ENCODE measurements at regions of chr14 and their contacts with region 1.

Region 1: DNA sequence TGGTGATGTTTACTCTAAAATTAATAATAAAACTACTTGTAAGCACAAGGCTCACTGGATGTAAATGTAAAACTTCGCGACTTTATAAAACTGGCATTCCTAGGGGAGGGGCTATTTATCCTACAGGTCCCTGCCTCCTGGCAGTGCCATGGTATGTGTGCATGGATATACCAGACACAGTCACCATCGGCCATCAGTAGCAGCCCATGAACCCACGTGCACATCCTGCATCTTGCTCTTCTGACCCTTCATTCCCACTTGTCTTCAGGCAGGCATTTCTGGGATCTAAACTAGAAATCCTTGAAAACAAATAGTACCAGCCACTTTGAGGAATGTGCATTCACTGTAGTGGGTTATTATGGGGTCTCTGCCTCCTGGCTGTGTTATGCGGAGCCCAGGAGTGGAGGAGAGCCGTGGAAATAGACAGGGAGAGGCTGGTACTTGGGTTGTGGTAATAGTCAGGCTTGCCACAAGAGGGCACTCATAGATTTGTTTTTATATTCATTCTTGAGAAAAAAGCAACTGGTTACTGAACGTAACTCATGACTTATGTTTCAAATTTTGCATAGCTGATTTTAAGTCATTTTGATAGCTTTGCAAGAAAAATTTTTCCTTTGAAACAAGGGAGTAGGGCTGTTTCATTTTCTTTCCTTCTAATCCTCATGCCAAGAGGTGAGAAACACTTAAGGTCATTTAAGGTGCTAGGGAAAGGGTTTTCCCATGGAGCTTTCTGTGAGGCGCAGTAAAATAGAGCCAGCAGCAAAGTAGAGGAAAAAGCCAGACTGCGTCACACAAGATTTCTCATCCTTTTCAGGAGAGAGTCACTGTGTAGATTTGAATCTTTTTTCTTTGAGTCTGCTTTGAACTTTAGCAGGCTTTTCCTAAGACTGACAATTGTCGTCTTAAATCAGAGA is 17.4 kb upstream of the GALNT16 start:
- DNase-seq: peak in 31 of 35 experiments; percentile 9 to 72 (median 42)
- ATAC-seq: peak in 3 of 4 experiments; percentile 53 to 69 (median 58)
- H3K4me3 ChIP-seq: no peak overlapping the region
- H3K4me3 Mint-ChIP-seq: no peak overlapping the region
- H3K27ac ChIP-seq: no peak overlapping the region
- H3K27ac Mint-ChIP-seq: no peak overlapping the region
- H3K4me1 ChIP-seq: no peaks in the 10 kb centered on the region
- H3K4me1 Mint-ChIP-seq: peaks cover 0 to 3% (median 3%) of the 10 kb centered on the region in 3 donors
- H3K27me3 ChIP-seq: no peaks in the 10 kb centered on the region
- H3K27me3 Mint-ChIP-seq: no peaks in the 10 kb centered on the region

Region 2: GRCh38 chr14:69460093-69460701 is 217.6 kb after region 1 on chr14:
- CTCF ChIA-PET with region 1: interaction called, 5 to 21 read pairs
- POLR2A ChIA-PET with region 1: no interaction called
- DNase-seq: peak in 31 of 35 experiments; percentile 4 to 68 (median 33)
- ATAC-seq: peak; percentile 47 to 71 (median 63)
- H3K4me3 ChIP-seq: no peak overlapping the region
- H3K4me3 Mint-ChIP-seq: no peak overlapping the region
- H3K27ac ChIP-seq: no peak overlapping the region
- H3K27ac Mint-ChIP-seq: no peak overlapping the region
- H3K4me1 ChIP-seq: no peaks in the 10 kb centered on the region
- H3K4me1 Mint-ChIP-seq: no peaks in the 10 kb centered on the region
- H3K27me3 ChIP-seq: no peaks in the 10 kb centered on the region
- H3K27me3 Mint-ChIP-seq: no peaks in the 10 kb centered on the region

Region 3: DNA sequence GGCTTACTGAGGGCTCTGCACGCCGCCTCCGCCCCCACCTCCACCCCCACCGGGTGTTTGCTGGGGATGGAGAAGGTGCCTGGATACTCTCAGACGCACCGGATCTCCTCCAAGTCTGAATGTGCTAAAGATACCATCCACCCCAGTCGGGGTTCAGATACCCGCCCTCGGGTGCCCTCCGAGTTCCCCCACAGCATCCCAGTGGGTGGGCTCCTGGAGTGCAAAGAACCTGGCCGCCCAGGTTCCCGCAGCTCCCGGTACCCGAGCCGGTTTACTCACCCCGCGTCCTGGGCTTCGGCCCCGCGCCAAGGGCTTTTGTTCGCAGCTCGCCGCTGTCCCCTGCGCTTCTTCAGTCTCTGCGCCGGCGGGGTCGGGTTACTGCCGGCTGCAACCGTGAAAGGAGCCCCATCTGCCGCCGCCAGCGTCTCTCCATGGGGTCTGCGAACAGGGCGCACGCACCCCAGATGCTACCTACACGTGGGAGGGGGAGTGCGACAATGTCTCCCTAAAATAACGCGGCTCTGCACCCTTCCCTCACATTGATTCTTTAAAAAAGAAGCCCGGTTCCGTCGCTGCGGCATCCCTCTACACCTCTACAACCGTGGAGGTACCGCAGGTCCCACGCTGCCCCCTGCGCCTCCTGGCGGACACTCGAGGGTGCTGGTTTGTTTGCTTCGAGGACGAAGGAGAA is 331.8 kb after region 1 on chr14 and contains the start of gene CCDC177:
- CTCF ChIA-PET with region 1: interaction called, 3 to 5 read pairs
- POLR2A ChIA-PET with region 1: interaction called in 1 of 2 experiments, 10 read pairs
- DNase-seq: peak; percentile 34 to 80 (median 66)
- ATAC-seq: peak; percentile 85 to 92 (median 88)
- H3K4me3 ChIP-seq: peak within 1 kb of the TSS; percentile 45 to 69
- H3K4me3 Mint-ChIP-seq: peak within 1 kb of the TSS; percentile 78 to 83 (median 81)
- H3K27ac ChIP-seq: no peak within 1 kb of the TSS
- H3K27ac Mint-ChIP-seq: peak within 1 kb of the TSS in 1 of 2 donors; percentile 19
- H3K4me1 ChIP-seq: peaks cover 2 to 27% of the 10 kb centered on the region in 2 experiments
- H3K4me1 Mint-ChIP-seq: peaks cover 12 to 20% (median 14%) of the 10 kb centered on the region in 3 donors
- H3K27me3 ChIP-seq: peaks cover 25 to 66% of the 10 kb centered on the region in 2 experiments
- H3K27me3 Mint-ChIP-seq: peaks cover 39 to 52% of the 10 kb centered on the region in 2 donors
- total RNA-seq, gene CCDC177: not detected

Region 4: GRCh38 chr14:69586404-69586803 is 343.8 kb after region 1 on chr14:
- CTCF ChIA-PET with region 1: no interaction called
- POLR2A ChIA-PET with region 1: no interaction called
- DNase-seq: no peak
- ATAC-seq: no peak
- H3K4me3 ChIP-seq: no peak overlapping the region
- H3K4me3 Mint-ChIP-seq: no peak overlapping the region
- H3K27ac ChIP-seq: no peak overlapping the region
- H3K27ac Mint-ChIP-seq: no peak overlapping the region
- H3K4me1 ChIP-seq: peaks cover 0 to 2% of the 10 kb centered on the region in 2 experiments
- H3K4me1 Mint-ChIP-seq: peaks cover 0 to 5% (median 0%) of the 10 kb centered on the region in 3 donors
- H3K27me3 ChIP-seq: peaks cover 0 to 2% of the 10 kb centered on the region in 2 experiments
- H3K27me3 Mint-ChIP-seq: no peaks in the 10 kb centered on the region

Measured in T-cell (primary cell).